Naive thymus-derived CD4-positive, alpha-beta T cell (primary cell): ENCODE measurements at regions of chr11 and their contacts with region 1.

Region 1: DNA sequence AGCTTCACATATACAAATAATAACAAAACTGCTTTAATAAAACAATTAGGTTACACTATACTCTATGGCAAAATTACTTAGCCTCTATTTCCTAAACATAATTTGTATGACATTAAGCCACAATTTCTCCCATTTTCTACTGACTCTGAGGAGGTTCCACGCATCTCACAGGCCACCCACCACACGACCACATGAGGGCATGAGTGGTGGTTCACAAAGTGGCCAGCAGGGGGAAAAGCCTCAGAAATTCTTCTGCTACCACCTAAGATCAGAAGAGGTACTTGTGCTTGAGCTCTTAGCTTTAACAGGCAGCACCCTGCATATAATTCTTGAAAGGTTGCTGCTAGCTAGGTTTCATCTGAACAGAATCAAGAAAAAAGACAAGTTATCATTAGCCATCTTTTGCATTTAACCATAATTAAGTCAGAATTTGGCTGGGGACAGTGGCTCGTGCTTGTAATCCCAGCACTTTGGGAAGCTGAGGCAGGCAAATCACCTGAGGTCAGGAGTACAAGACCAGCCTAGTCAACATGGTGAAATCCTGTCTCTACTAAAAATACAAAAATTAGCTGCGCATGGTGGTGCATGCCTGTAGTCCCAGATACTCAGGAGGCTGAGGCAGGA is 7.7 kb downstream of the LPXN start:
- DNase-seq: peak; percentile 48 to 79 (median 75)
- ATAC-seq: peak; percentile 99
- H3K4me3 ChIP-seq: no peak overlapping the region
- H3K4me3 Mint-ChIP-seq: peak overlapping the region; percentile 20 to 71 (median 62)
- H3K27ac ChIP-seq: no peak overlapping the region
- H3K27ac Mint-ChIP-seq: peak overlapping the region in 8 of 9 donors; percentile 0 to 89 (median 49)
- H3K4me1 ChIP-seq: peaks cover 24 to 53% of the 10 kb centered on the region in 2 donors
- H3K4me1 Mint-ChIP-seq: peaks cover 43 to 79% (median 58%) of the 10 kb centered on the region in 7 donors
- H3K27me3 ChIP-seq: no peaks in the 10 kb centered on the region
- H3K27me3 Mint-ChIP-seq: no peaks in the 10 kb centered on the region

Region 2: GRCh38 chr11:58530236-58530635 is 37.8 kb before region 1 on chr11:
- CTCF ChIA-PET with region 1: interaction called, 27 read pairs
- POLR2A ChIA-PET with region 1: interaction called, 140 read pairs
- intact Hi-C with region 1: no loop called
- DNase-seq: peak in 7 of 9 donors; percentile 49 to 73 (median 64)
- ATAC-seq: peak; percentile 81
- H3K4me3 ChIP-seq: peak overlapping the region; percentile 6
- H3K4me3 Mint-ChIP-seq: peak overlapping the region; percentile 10 to 73 (median 57)
- H3K27ac ChIP-seq: peak overlapping the region; percentile 65
- H3K27ac Mint-ChIP-seq: peak overlapping the region; percentile 59 to 99 (median 90)
- H3K4me1 ChIP-seq: peaks cover 7 to 41% of the 10 kb centered on the region in 2 donors
- H3K4me1 Mint-ChIP-seq: peaks cover 9 to 89% (median 55%) of the 10 kb centered on the region in 7 donors
- H3K27me3 ChIP-seq: no peaks in the 10 kb centered on the region
- H3K27me3 Mint-ChIP-seq: no peaks in the 10 kb centered on the region

Region 3: DNA sequence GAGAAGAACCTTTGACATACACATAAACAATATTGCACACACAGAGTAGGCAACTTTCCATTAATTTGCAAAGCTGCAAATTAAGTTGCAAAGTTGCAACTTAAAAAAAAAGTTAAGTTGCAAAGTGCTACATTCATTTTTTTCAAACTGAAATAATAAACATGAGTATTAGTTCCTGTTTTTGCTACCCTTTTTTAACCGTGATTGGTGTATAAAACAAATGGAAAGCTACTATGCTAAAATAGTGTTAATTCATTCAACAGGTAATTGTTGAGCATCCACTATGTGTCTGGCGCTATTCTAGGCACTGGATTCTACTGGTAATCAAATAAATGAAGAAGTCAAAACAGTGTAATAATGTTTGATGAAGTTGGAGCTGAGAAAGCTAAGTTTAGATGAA is 19.0 kb after region 1 on chr11:
- CTCF ChIA-PET with region 1: interaction called, 11 read pairs
- POLR2A ChIA-PET with region 1: interaction called, 4 read pairs
- intact Hi-C with region 1: no loop called
- DNase-seq: no peak
- ATAC-seq: no peak
- H3K4me3 ChIP-seq: no peak overlapping the region
- H3K4me3 Mint-ChIP-seq: no peak overlapping the region
- H3K27ac ChIP-seq: no peak overlapping the region
- H3K27ac Mint-ChIP-seq: peak overlapping the region in 1 of 9 donors; percentile 2
- H3K4me1 ChIP-seq: peaks cover 7 to 15% of the 10 kb centered on the region in 2 donors
- H3K4me1 Mint-ChIP-seq: peaks cover 35 to 89% (median 82%) of the 10 kb centered on the region in 7 donors
- H3K27me3 ChIP-seq: no peaks in the 10 kb centered on the region
- H3K27me3 Mint-ChIP-seq: no peaks in the 10 kb centered on the region

Region 4: DNA sequence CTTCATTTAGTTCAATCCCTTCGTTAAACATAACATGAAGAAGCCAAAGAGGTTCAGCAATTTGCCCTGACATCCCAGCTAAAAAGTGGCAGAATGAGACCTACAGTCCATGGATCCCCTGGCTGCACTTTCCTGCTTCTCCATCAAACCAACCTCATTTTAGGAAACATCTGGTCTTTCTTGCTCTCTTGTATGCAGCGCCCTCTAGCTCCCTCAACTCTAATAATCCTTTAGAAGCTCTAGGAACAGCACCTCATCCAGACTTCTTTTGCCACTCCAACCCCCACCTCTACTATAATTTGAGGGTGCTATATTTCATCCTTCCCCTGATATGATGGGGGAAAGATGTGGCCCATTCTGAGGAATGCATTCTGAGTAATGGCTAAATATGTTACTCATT is 61.9 kb after region 1 on chr11:
- CTCF ChIA-PET with region 1: interaction called, 23 read pairs
- POLR2A ChIA-PET with region 1: interaction called, 7 read pairs
- intact Hi-C with region 1: loop called in 1 of 2 experiments (anchors 1 kb)
- DNase-seq: peak in 4 of 9 donors; percentile 20 to 34 (median 29)
- ATAC-seq: peak; percentile 74
- H3K4me3 ChIP-seq: no peak overlapping the region
- H3K4me3 Mint-ChIP-seq: no peak overlapping the region
- H3K27ac ChIP-seq: no peak overlapping the region
- H3K27ac Mint-ChIP-seq: peak overlapping the region in 5 of 9 donors; percentile 33 to 75 (median 64)
- H3K4me1 ChIP-seq: no peaks in the 10 kb centered on the region
- H3K4me1 Mint-ChIP-seq: peaks cover 0 to 7% (median 5%) of the 10 kb centered on the region in 7 donors
- H3K27me3 ChIP-seq: no peaks in the 10 kb centered on the region
- H3K27me3 Mint-ChIP-seq: no peaks in the 10 kb centered on the region

Region 5: GRCh38 chr11:58788355-58789023 is 220.5 kb after region 1 on chr11:
- CTCF ChIA-PET with region 1: interaction called, 3 read pairs
- POLR2A ChIA-PET with region 1: no interaction called
- intact Hi-C with region 1: loop called in 1 of 2 experiments (anchors 2 kb)
- DNase-seq: peak in 8 of 9 donors; percentile 27 to 79 (median 74)
- ATAC-seq: peak; percentile 93
- H3K4me3 ChIP-seq: no peak overlapping the region
- H3K4me3 Mint-ChIP-seq: no peak overlapping the region
- H3K27ac ChIP-seq: no peak overlapping the region
- H3K27ac Mint-ChIP-seq: peak overlapping the region in 1 of 9 donors; percentile 77
- H3K4me1 ChIP-seq: no peaks in the 10 kb centered on the region
- H3K4me1 Mint-ChIP-seq: peaks cover 0 to 4% (median 0%) of the 10 kb centered on the region in 7 donors
- H3K27me3 ChIP-seq: no peaks in the 10 kb centered on the region
- H3K27me3 Mint-ChIP-seq: peaks cover 1 to 21% (median 6%) of the 10 kb centered on the region in 5 donors

Region 6: GRCh38 chr11:58801974-58802545 is 234.1 kb after region 1 on chr11:
- CTCF ChIA-PET with region 1: no interaction called
- POLR2A ChIA-PET with region 1: no interaction called
- intact Hi-C with region 1: no loop called
- DNase-seq: no peak
- ATAC-seq: no peak
- H3K4me3 ChIP-seq: no peak overlapping the region
- H3K4me3 Mint-ChIP-seq: no peak overlapping the region
- H3K27ac ChIP-seq: no peak overlapping the region
- H3K27ac Mint-ChIP-seq: no peak overlapping the region
- H3K4me1 ChIP-seq: no peaks in the 10 kb centered on the region
- H3K4me1 Mint-ChIP-seq: no peaks in the 10 kb centered on the region
- H3K27me3 ChIP-seq: no peaks in the 10 kb centered on the region
- H3K27me3 Mint-ChIP-seq: peaks cover 5 to 26% (median 15%) of the 10 kb centered on the region in 5 donors